ENCODE measurements at regions of chr15 and their contacts with region 1.

Region 1: DNA sequence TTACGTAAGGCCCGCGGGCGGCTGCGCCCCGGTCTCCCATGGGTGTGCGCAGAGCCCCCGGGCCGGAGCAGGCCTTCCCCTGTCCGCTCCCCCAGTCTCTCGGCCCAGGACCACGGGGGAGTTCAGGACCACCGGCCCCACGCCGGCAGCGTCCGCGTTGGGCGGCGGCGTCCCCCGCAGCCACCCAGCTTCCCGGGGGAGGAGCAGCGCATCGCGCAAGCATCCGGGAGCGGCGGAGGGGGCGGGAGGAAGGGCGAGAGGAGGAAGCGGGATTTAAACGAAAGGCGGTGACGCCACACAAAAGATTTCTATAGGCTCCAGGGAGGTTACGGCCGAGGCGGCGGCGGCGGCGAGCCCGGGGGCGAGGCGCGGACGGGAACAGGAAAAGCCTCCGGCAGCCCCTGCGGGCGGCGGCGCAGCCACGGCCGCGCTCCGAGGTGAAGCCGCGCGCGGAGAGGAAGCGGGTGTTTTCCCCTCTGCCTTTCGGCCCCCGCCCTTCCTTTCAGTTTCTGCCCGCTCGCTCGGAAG is at the start of gene TLNRD1:
- DNase-seq: peak; percentile 49 to 93 (median 81)
- ATAC-seq: peak; percentile 59
- H3K4me3 ChIP-seq: peak within 1 kb of the TSS; percentile 74 to 78
- H3K4me3 Mint-ChIP-seq: peak within 1 kb of the TSS; percentile 96
- H3K27ac ChIP-seq: peak within 1 kb of the TSS; percentile 84 to 88
- H3K27ac Mint-ChIP-seq: peak within 1 kb of the TSS; percentile 98
- H3K4me1 ChIP-seq: peaks cover 42% of the 10 kb centered on the region
- H3K4me1 Mint-ChIP-seq: peaks cover 49% of the 10 kb centered on the region
- H3K27me3 ChIP-seq: no peaks in the 10 kb centered on the region
- H3K27me3 Mint-ChIP-seq: no peaks in the 10 kb centered on the region
- CTCF ChIP-seq: no peak
- total RNA-seq, gene TLNRD1: 15.3 to 15.6 TPM

Region 2: DNA sequence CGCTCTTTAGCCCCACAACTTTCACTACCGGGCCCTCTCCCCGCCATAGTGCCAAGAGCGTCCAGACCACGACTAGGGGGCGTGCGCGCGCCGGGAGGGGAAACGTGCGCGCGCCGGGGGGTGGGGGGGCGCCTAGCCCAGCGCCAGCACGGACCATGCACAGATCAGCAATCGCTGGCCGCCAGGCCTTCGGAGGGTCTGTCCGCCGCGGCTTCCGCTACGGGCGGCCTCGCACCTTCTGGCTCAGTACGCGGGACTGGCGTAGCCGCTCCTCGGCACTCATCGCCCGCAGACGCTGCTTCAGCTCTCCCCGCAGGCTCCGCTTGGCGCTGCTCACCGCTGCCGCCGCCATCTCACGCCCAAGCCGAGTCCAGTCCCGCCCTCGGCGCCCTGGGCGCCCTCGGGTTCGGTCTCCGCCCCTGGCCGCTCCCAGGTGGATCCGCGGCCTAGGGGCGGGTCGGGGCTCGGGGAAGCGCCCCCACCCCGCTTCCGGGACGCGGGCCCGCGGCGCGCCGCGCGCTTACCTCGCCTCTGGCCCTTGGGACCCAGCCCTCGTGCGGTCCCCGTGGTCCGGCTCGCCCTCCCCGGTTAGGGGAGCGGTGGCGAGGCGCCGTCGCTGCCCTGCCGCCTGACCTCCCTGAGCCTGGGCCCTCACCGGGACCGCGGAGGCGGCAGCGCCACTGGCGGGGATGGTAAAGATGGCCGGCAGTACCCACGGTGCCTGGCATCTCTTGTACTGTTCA is 1103.9 kb before region 1 on chr15 and contains the start of gene MTHFS:
- CTCF ChIA-PET with region 1: no interaction called
- POLR2A ChIA-PET with region 1: no interaction called
- intact Hi-C with region 1: loop called in 1 of 2 experiments (anchors 10 kb)
- DNase-seq: peak; percentile 61 to 91 (median 79)
- ATAC-seq: peak; percentile 84
- H3K4me3 ChIP-seq: peak within 1 kb of the TSS; percentile 75 to 96
- H3K4me3 Mint-ChIP-seq: peak within 1 kb of the TSS; percentile 96
- H3K27ac ChIP-seq: peak within 1 kb of the TSS; percentile 94 to 95
- H3K27ac Mint-ChIP-seq: peak within 1 kb of the TSS; percentile 100
- H3K4me1 ChIP-seq: peaks cover 28% of the 10 kb centered on the region
- H3K4me1 Mint-ChIP-seq: peaks cover 40% of the 10 kb centered on the region
- H3K27me3 ChIP-seq: no peaks in the 10 kb centered on the region
- H3K27me3 Mint-ChIP-seq: no peaks in the 10 kb centered on the region
- CTCF ChIP-seq: peak; percentile 36
- total RNA-seq, gene MTHFS: 5.1 to 7.8 TPM

Region 3: DNA sequence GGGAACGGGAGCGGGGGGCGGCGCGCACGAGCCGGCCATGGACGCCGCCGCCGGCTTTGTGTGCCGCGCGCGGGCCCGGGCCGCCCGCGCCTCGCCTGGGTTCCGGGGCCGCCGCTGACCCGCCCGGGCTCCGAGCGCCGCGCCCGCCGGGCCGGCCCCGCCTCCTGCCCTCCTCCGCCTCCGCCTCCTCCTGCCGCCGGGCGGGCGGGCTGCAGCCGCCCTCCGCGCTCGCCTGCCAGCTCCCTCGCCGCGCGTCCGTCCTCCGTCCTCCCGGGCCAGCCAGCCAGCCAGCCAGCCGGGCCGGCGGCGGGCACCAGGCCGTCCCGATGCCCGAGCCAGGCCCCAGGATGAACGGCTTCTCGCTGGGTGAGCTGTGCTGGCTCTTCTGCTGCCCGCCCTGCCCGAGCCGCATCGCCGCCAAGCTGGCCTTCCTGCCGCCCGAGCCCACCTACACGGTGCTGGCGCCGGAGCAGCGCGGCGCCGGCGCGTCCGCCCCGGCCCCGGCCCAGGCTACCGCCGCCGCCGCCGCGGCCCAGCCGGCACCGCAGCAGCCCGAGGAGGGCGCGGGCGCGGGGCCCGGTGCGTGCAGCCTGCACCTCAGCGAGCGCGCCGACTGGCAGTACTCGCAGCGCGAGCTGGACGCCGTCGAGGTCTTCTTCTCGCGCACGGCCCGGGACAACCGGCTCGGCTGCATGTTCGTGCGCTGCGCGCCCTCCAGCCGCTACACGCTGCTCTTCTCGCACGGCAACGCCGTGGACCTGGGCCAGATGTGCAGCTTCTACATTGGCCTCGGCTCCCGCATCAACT is 305.4 kb before region 1 on chr15 and contains the start of gene ABHD17C:
- CTCF ChIA-PET with region 1: interaction called, 3 read pairs
- POLR2A ChIA-PET with region 1: no interaction called
- intact Hi-C with region 1: loop called in 1 of 2 experiments (anchors 5 kb)
- DNase-seq: peak in 8 of 9 experiments; percentile 14 to 70 (median 42)
- ATAC-seq: peak; percentile 69
- H3K4me3 ChIP-seq: peak within 1 kb of the TSS; percentile 58 to 63
- H3K4me3 Mint-ChIP-seq: peak within 1 kb of the TSS; percentile 95
- H3K27ac ChIP-seq: peak within 1 kb of the TSS; percentile 20 to 57
- H3K27ac Mint-ChIP-seq: peak within 1 kb of the TSS; percentile 86
- H3K4me1 ChIP-seq: peaks cover 11% of the 10 kb centered on the region
- H3K4me1 Mint-ChIP-seq: peaks cover 23% of the 10 kb centered on the region
- H3K27me3 ChIP-seq: no peaks in the 10 kb centered on the region
- H3K27me3 Mint-ChIP-seq: peaks cover 3% of the 10 kb centered on the region
- CTCF ChIP-seq: no peak
- total RNA-seq, gene ABHD17C: 0.75 to 1.1 TPM

Region 4: DNA sequence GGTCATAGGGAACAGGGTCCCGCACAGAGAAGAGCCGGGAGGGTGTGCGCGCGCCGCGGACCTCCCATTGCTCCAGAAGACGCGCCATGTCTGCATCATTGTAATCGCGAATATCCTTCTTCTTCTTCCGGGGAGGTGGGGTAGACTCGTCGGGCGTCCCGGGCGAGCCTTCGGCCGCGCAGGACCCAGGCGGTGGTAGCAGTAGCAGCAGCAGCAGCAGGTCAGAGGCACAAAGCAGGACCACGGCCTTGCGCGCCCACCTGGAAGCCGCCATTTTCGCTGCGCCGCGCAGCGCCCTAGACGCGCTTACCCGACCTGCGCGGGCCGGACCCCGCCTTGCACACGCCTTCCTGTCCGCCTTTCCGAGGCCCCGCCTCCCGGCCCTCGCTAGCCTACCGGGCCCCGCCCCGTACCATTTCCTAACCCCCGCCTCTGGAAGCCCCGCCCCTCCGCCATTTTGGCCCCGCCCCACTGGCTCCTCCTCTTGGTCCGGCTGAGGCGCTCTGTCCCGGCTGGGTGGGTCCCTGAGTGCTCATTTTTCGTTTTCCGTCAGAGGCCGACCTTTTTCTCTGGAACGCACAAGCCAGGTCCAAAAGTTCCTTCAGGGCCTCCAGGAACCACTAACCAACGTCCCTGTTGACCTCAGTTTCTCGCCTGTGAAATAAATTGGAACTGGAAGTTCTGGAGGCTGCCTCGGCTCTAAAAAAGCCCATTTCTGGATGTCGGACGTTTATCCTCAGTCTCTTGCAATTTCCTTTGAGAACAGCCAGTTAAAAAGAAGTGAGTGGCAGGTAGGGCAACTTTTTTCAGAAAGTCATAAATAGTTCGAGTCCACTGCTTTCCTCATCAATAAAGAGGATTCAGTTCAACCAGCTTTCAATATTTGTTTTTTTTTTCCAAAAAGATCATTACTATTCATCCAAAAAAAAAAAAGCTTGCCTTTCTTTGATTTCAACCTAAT is 10.9 kb before region 1 on chr15 and contains the start of gene MESD:
- CTCF ChIA-PET with region 1: interaction called, 3 read pairs
- POLR2A ChIA-PET with region 1: interaction called, 20 read pairs
- intact Hi-C with region 1: loop called (anchors 1 kb)
- DNase-seq: peak; percentile 91 to 99 (median 98)
- ATAC-seq: peak; percentile 100
- H3K4me3 ChIP-seq: peak within 1 kb of the TSS; percentile 70 to 96
- H3K4me3 Mint-ChIP-seq: peak within 1 kb of the TSS; percentile 100
- H3K27ac ChIP-seq: peak within 1 kb of the TSS; percentile 76 to 95
- H3K27ac Mint-ChIP-seq: peak within 1 kb of the TSS; percentile 99
- H3K4me1 ChIP-seq: peaks cover 50% of the 10 kb centered on the region
- H3K4me1 Mint-ChIP-seq: peaks cover 62% of the 10 kb centered on the region
- H3K27me3 ChIP-seq: no peaks in the 10 kb centered on the region
- H3K27me3 Mint-ChIP-seq: no peaks in the 10 kb centered on the region
- CTCF ChIP-seq: no peak
- total RNA-seq, gene MESD: 6.4 to 8.1 TPM

Region 5: DNA sequence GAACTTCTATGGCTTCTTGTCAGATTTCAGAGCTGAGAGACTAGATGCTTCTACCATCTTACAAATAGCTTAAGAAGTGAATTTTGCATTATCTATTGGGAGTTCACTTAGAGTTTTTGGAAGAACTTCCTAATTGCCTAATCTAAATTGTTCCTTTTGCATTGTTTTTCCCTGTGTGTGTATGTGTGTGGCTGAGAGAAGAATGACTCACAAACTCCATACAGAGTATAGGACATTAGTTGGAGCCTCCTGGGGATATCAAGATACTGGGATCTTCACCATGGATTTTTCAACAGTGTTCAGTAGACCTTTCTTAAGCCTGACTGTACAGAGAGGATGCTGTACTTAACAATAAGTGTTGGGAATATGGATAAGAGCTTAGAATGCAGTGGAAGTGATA is 10.9 kb after region 1 on chr15:
- CTCF ChIA-PET with region 1: no interaction called
- POLR2A ChIA-PET with region 1: no interaction called
- intact Hi-C with region 1: no loop called
- DNase-seq: no peak
- ATAC-seq: no peak
- H3K4me3 ChIP-seq: no peak overlapping the region
- H3K4me3 Mint-ChIP-seq: no peak overlapping the region
- H3K27ac ChIP-seq: no peak overlapping the region
- H3K27ac Mint-ChIP-seq: no peak overlapping the region
- H3K4me1 ChIP-seq: no peaks in the 10 kb centered on the region
- H3K4me1 Mint-ChIP-seq: peaks cover 24% of the 10 kb centered on the region
- H3K27me3 ChIP-seq: no peaks in the 10 kb centered on the region
- H3K27me3 Mint-ChIP-seq: no peaks in the 10 kb centered on the region
- CTCF ChIP-seq: no peak

Region 6: GRCh38 chr15:81106560-81106959 is 105.9 kb after region 1 on chr15:
- CTCF ChIA-PET with region 1: interaction called, 3 read pairs
- POLR2A ChIA-PET with region 1: interaction called, 3 read pairs
- intact Hi-C with region 1: loop called in 1 of 2 experiments (anchors 5 kb)
- DNase-seq: peak in 5 of 9 experiments; percentile 32 to 67 (median 45)
- ATAC-seq: no peak
- H3K4me3 ChIP-seq: no peak overlapping the region
- H3K4me3 Mint-ChIP-seq: no peak overlapping the region
- H3K27ac ChIP-seq: no peak overlapping the region
- H3K27ac Mint-ChIP-seq: no peak overlapping the region
- H3K4me1 ChIP-seq: no peaks in the 10 kb centered on the region
- H3K4me1 Mint-ChIP-seq: no peaks in the 10 kb centered on the region
- H3K27me3 ChIP-seq: no peaks in the 10 kb centered on the region
- H3K27me3 Mint-ChIP-seq: peaks cover 23% of the 10 kb centered on the region
- CTCF ChIP-seq: peak; percentile 69

Region 7: GRCh38 chr15:81296673-81297072 is 296.0 kb after region 1 on chr15:
- CTCF ChIA-PET with region 1: no interaction called
- POLR2A ChIA-PET with region 1: interaction called, 3 read pairs
- intact Hi-C with region 1: loop called (anchors 1 to 5 kb)
- DNase-seq: peak; percentile 50 to 94 (median 79)
- ATAC-seq: peak; percentile 46
- H3K4me3 ChIP-seq: peak overlapping the region; percentile 88 to 89
- H3K4me3 Mint-ChIP-seq: peak overlapping the region; percentile 92
- H3K27ac ChIP-seq: peak overlapping the region; percentile 84 to 92
- H3K27ac Mint-ChIP-seq: peak overlapping the region; percentile 98
- H3K4me1 ChIP-seq: peaks cover 55% of the 10 kb centered on the region
- H3K4me1 Mint-ChIP-seq: peaks cover 72% of the 10 kb centered on the region
- H3K27me3 ChIP-seq: no peaks in the 10 kb centered on the region
- H3K27me3 Mint-ChIP-seq: no peaks in the 10 kb centered on the region
- CTCF ChIP-seq: no peak